Panc1 (cell line): ENCODE measurements at regions of chr1 and their contacts with region 1.

Region 1: DNA sequence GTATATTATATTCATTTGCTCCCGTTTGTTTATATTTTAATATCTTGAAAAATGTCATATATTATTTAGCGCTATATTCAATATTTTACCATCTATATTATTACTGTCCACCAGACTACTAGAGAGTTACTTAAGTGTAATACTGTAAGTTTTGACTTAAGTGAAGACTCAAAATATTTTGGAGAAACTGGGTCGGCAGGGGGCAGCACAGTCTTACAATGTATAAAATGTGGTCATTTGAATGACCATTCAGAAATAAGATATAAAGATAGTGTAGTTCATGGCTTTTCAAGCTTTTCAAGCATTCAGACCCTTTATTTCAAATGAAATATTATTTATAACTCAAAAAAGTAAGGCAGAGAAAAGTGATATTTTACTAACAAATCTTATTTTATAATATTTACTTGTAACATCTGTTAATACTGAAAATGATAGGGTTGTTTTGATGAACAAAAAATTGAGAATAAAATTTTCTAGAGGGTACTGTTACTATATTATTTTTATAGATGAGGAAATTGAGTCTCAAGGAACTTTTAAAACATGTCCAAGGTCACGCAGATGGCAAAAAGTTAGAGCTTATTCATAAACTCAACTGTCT is 89.0 kb upstream of the SERTAD4 start:
- DNase-seq: no peak
- ATAC-seq: no peak
- H3K4me3 ChIP-seq: no peak overlapping the region
- H3K27ac ChIP-seq: no peak overlapping the region
- H3K4me1 ChIP-seq: no peaks in the 10 kb centered on the region
- H3K27me3 ChIP-seq: no peaks in the 10 kb centered on the region
- CTCF ChIP-seq: peak; percentile 65; the same call in 1 of the 2 replicates

Region 2: GRCh38 chr1:210311726-210312493 is 168.3 kb after region 1 on chr1:
- CTCF ChIA-PET with region 1: no interaction called
- POLR2A ChIA-PET with region 1: no interaction called
- in situ Hi-C with region 1: no loop called
- intact Hi-C with region 1: loop called (anchors 1 kb)
- DNase-seq: no peak
- ATAC-seq: peak; percentile 40; the same call in 1 of the 2 replicates
- H3K4me3 ChIP-seq: peak overlapping the region; percentile 41 to 48
- H3K27ac ChIP-seq: no peak overlapping the region
- H3K4me1 ChIP-seq: no peaks in the 10 kb centered on the region
- H3K27me3 ChIP-seq: peaks cover 9% of the 10 kb centered on the region; the same call in 1 of the 2 replicates
- CTCF ChIP-seq: no peak